ENCODE measurements at regions of chr9 and their contacts with region 1.

Region 1: DNA sequence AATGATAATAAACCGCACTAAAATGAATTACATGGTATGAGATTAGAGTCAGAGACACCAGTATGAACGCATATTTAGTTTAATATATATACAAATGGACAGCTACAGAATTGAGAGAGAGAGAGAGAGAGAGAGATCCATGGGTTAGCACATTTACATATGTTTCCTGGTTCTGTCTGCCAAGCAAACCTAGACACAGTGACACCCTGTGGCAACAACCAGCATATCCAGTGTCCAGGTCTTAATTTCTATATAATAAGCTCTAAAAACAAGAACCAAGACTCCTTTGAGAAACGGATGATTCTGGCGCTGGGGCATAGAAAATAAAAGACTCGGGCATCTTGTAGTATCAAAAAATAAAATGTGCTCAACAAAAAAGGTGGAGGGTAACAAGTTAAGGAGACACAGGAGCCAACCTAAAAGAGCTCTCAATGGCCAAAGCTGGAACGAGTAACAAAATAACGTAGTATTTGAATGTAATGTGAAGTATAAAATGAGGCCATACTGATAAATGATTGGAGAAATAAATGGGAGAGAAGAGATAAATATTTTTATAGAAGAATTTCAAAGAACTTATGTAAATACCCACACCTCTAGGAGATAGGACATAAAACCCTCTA is 84.5 kb downstream of the RFX3 start:
- DNase-seq: peak in 1 of 2 donors; percentile 13
- ATAC-seq: peak in 4 of 8 donors; percentile 41 to 59 (median 46)
- H3K4me3 ChIP-seq: no peak overlapping the region
- H3K27ac ChIP-seq: no peak overlapping the region
- H3K4me1 ChIP-seq: peaks cover 0 to 6% (median 0%) of the 10 kb centered on the region in 9 donors
- H3K27me3 ChIP-seq: no peaks in the 10 kb centered on the region
- CTCF ChIP-seq: peak in 8 of 9 donors; percentile 5 to 65 (median 54)

Region 2: GRCh38 chr9:3240656-3241268 is 200.5 kb before region 1 on chr9:
- intact Hi-C with region 1: loop called in 6 of 10 experiments (anchors 5 to 10 kb)
- DNase-seq: peak; percentile 43 to 52
- ATAC-seq: peak in 7 of 8 donors; percentile 69 to 87 (median 79)
- H3K4me3 ChIP-seq: no peak overlapping the region
- H3K27ac ChIP-seq: no peak overlapping the region
- H3K4me1 ChIP-seq: peaks cover 0 to 18% (median 0%) of the 10 kb centered on the region in 9 donors
- H3K27me3 ChIP-seq: no peaks in the 10 kb centered on the region
- CTCF ChIP-seq: peak; percentile 39 to 87 (median 72)

Region 3: DNA sequence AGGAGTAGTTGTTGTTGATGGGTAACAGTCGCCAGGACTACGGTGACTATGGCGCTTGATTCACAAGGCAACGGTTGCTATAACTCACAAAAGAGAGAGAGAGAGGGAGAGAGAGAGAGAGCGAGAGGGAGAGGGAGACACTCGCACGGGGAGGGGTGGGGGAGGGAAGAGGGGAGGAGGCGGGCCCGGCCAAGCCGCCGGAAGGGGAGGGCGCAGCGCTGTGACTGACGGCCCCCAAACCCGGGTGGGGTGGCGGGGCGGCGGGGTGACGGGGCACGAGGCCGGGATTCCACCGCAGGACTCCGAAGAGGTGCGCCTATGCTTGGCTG is 84.5 kb after region 1 on chr9 and contains the start of gene RFX3:
- intact Hi-C with region 1: no loop called
- DNase-seq: peak; percentile 92 to 93
- ATAC-seq: peak; percentile 94 to 99 (median 97)
- H3K4me3 ChIP-seq: peak within 1 kb of the TSS; percentile 64 to 90 (median 80)
- H3K27ac ChIP-seq: peak within 1 kb of the TSS; percentile 99 to 100 (median 100)
- H3K4me1 ChIP-seq: peaks cover 0 to 38% (median 28%) of the 10 kb centered on the region in 9 donors
- H3K27me3 ChIP-seq: no peaks in the 10 kb centered on the region
- CTCF ChIP-seq: no peak
- total RNA-seq, gene RFX3: 3.0 to 5.9 (median 3.9) TPM